ENCODE measurements at regions of chr2 and their contacts with region 1.

Region 1: GRCh38 chr2:27489498-27490397 is at the start of gene IFT172:
- DNase-seq: peak; percentile 100
- ATAC-seq: peak; percentile 98
- H3K4me3 ChIP-seq: peak within 1 kb of the TSS; percentile 71
- H3K27ac ChIP-seq: 0 out of 2 replicates have a peak within 1 kb of the TSS, but pooled peaks have one; percentile 3
- H3K4me1 ChIP-seq: peaks cover 16% of the 10 kb centered on the region
- H3K27me3 ChIP-seq: no peaks in the 10 kb centered on the region
- CTCF ChIP-seq: no peak
- total RNA-seq, gene IFT172: 12.8 and 22.9 TPM in 2 replicates

Region 2: GRCh38 chr2:27509326-27509725 is 19.6 kb after region 1 on chr2:
- CTCF ChIA-PET with region 1: no interaction called
- POLR2A ChIA-PET with region 1: interaction called, 11 read pairs
- intact Hi-C with region 1: no loop called
- DNase-seq: no peak
- ATAC-seq: no peak
- H3K4me3 ChIP-seq: no peak overlapping the region
- H3K27ac ChIP-seq: no peak overlapping the region
- H3K4me1 ChIP-seq: no peaks in the 10 kb centered on the region
- H3K27me3 ChIP-seq: no peaks in the 10 kb centered on the region
- CTCF ChIP-seq: no peak

Region 3: GRCh38 chr2:27545348-27546141 is 55.8 kb after region 1 on chr2:
- CTCF ChIA-PET with region 1: no interaction called
- POLR2A ChIA-PET with region 1: no interaction called
- intact Hi-C with region 1: no loop called
- DNase-seq: peak; percentile 54
- ATAC-seq: peak; percentile 29; the same call in 1 of the 2 replicates
- H3K4me3 ChIP-seq: no peak overlapping the region
- H3K27ac ChIP-seq: no peak overlapping the region
- H3K4me1 ChIP-seq: peaks cover 13% of the 10 kb centered on the region
- H3K27me3 ChIP-seq: no peaks in the 10 kb centered on the region
- CTCF ChIP-seq: no peak